ENCODE measurements at regions of chr10 and their contacts with region 1.

Region 1: GRCh38 chr10:17607603-17608332 is 9.4 kb downstream of the HACD1 start:
- DNase-seq: peak in 3 of 5 donors; percentile 14 to 72 (median 54)
- H3K4me3 ChIP-seq: no peak overlapping the region
- H3K27ac ChIP-seq: no peak overlapping the region
- H3K4me1 ChIP-seq: no peaks in the 10 kb centered on the region
- H3K27me3 ChIP-seq: no peaks in the 10 kb centered on the region
- CTCF ChIP-seq: peak; percentile 91

Region 2: DNA sequence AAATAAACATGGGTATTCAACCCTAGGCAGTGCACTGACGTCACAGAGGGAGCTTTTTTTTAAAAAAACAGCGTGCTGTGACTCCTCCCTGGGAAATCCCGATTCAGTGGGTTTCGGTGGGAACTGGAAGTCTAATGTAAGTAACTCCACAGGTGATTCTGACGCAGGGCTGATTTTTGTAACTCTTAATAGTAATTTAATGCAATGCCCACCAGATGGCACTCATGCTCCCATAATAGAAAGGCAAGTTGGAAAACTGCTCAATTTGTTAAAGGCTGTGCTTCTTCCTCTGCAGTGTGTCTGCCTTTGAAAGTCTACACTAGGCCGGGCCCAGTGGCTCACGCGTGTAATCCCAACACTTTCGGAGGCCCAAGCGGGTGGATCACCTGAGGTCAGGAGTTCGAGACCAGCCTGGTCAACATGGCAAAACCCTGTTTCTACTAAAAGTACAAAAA is 779.6 kb before region 1 on chr10:
- intact Hi-C with region 1: no loop called
- DNase-seq: peak; percentile 67 to 93 (median 70)
- H3K4me3 ChIP-seq: no peak overlapping the region
- H3K27ac ChIP-seq: no peak overlapping the region
- H3K4me1 ChIP-seq: peaks cover 0 to 4% (median 2%) of the 10 kb centered on the region in 3 donors
- H3K27me3 ChIP-seq: no peaks in the 10 kb centered on the region
- CTCF ChIP-seq: peak; percentile 52

Region 3: DNA sequence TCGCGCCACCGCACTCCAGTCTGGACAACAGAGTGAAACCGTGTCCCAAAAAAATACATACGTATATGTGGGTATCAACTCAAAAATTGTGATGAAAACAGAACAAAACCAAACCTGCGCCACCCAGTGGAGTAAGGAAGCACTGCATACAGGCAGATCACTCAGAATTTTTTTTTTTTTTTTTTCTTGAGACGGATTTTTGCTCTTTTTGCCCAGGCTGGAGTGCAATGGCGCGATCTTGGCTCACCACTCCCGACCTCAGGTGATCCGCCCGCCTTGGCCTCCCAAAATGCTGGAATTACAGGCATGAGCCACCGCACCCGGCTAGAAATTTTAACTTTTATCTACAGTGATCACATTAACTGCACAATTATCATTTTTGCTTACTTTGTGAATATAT is 135.2 kb after region 1 on chr10:
- intact Hi-C with region 1: loop called (anchors 10 kb)
- DNase-seq: peak in 4 of 5 donors; percentile 35 to 58 (median 48)
- H3K4me3 ChIP-seq: no peak overlapping the region
- H3K27ac ChIP-seq: no peak overlapping the region
- H3K4me1 ChIP-seq: no peaks in the 10 kb centered on the region
- H3K27me3 ChIP-seq: no peaks in the 10 kb centered on the region
- CTCF ChIP-seq: peak; percentile 83

Region 4: DNA sequence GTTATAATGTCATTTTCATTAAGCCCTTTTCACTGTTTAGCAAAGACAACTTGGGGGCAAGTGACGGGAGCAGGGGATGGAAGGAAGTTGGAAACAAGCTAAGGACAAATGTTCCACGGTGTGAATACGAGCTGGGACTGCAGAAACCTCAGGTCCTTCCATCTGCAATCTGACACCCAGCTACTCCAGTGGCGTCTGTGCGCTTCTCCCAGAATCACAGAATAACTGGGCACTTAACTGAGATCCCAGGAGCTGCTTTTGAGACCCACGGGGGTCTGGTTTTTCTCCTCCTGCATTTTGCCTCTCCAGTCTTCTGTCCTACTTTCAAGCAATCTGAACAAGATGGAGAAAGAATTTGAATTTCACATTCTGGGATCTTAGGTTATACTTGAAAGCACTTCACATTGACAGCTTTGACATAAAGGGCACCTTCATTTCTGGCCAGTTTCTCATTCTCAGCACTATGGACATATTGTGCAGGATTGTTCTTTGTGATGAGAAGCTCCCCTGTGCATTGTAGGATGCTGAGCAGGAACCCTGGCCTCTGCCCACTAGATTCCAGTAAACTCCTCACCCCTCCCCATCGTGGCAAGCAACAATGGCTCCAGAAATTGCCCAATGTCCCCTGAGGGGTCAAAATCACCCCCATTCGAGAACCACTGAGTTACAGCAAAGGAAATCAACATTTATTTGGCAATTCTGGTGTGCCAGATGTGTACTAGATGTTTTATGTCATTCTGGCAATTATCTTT is 726.5 kb after region 1 on chr10:
- intact Hi-C with region 1: no loop called
- DNase-seq: peak in 1 of 5 donors; percentile 18
- H3K4me3 ChIP-seq: peak overlapping the region in 2 of 3 donors; percentile 50 to 51
- H3K27ac ChIP-seq: peak overlapping the region; percentile 77 to 84
- H3K4me1 ChIP-seq: peaks cover 0 to 15% (median 0%) of the 10 kb centered on the region in 3 donors
- H3K27me3 ChIP-seq: no peaks in the 10 kb centered on the region
- CTCF ChIP-seq: no peak

Measured in kidney (tissue), 22 donors.